H1 (cell line): ENCODE measurements at regions of chr19 and their contacts with region 1.

Region 1: DNA sequence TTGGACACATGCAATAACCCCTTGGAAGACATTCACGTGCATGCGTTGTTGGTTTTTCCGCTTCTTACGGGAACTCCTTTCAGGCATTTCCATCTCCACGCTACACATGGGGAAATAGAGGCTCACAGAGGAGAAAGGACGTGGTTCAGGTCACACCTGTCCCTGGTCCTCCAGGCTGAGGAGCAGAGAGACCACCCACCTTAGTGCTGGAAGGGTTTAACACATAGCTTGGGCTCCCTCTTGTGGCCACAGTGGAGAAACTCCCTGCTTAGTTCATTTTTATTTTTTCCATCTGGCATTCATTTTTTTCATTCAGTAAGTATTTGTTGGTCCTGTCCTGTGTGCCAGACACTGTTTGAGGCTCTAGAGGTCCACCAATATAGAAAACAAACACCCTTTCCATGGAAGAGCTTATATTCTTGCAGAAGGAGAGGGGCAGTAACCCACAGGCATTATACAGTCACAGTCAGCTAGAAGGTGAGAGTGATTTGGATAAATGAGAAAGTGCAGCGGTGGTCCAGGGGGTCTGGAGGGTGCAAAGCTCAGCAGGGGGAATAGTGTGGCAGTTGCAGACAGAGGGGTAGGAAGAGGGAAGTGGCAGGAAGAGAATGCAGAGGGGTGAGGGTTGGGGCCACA is 24.2 kb upstream of the TTYH1 start:
- DNase-seq: peak in 1 of 2 experiments; percentile 77
- H3K4me3 ChIP-seq: peak overlapping the region in 1 of 4 experiments; percentile 25; a peak in 1 of 8 replicates
- H3K27ac ChIP-seq: no peak overlapping the region
- H3K4me1 ChIP-seq: peaks cover 0 to 9% (median 6%) of the 10 kb centered on the region in 4 experiments; a peak in 6 of 7 replicates
- H3K27me3 ChIP-seq: peaks cover 0 to 2% (median 0%) of the 10 kb centered on the region in 4 experiments; a peak in 2 of 7 replicates
- CTCF ChIP-seq: peak; percentile 46 to 80 (median 79)
- EP300 ChIP-seq: no peak
- POLR2A ChIP-seq: no peak
- RAD21 ChIP-seq: peak; percentile 80 to 85

Region 2: GRCh38 chr19:54325194-54325621 is 65.9 kb before region 1 on chr19:
- CTCF ChIA-PET with region 1: interaction called, 56 read pairs
- POLR2A ChIA-PET with region 1: no interaction called
- DNase-seq: peak in 1 of 2 experiments; percentile 65
- H3K4me3 ChIP-seq: no peak overlapping the region
- H3K27ac ChIP-seq: no peak overlapping the region
- H3K4me1 ChIP-seq: peaks cover 0 to 7% (median 5%) of the 10 kb centered on the region in 4 experiments; a peak in 6 of 7 replicates
- H3K27me3 ChIP-seq: peaks cover 0 to 2% (median 0%) of the 10 kb centered on the region in 4 experiments; a peak in 1 of 7 replicates
- CTCF ChIP-seq: peak in 2 of 3 experiments; percentile 74 to 87; a peak in 3 of 4 replicates
- EP300 ChIP-seq: no peak
- POLR2A ChIP-seq: no peak
- RAD21 ChIP-seq: peak; percentile 58

Region 3: GRCh38 chr19:54364775-54365257 is 26.2 kb before region 1 on chr19 and contains the start of gene LAIR1:
- CTCF ChIA-PET with region 1: interaction called, 39 read pairs
- POLR2A ChIA-PET with region 1: interaction called, 3 read pairs
- DNase-seq: no peak
- H3K4me3 ChIP-seq: no peak within 1 kb of the TSS
- H3K27ac ChIP-seq: no peak within 1 kb of the TSS
- H3K4me1 ChIP-seq: peaks cover 0 to 3% (median 0%) of the 10 kb centered on the region in 4 experiments; a peak in 1 of 7 replicates
- H3K27me3 ChIP-seq: no peaks in the 10 kb centered on the region
- CTCF ChIP-seq: no peak
- EP300 ChIP-seq: no peak
- POLR2A ChIP-seq: no peak
- RAD21 ChIP-seq: no peak
- total RNA-seq, gene LAIR1: not detected in 2 replicates

Region 4: DNA sequence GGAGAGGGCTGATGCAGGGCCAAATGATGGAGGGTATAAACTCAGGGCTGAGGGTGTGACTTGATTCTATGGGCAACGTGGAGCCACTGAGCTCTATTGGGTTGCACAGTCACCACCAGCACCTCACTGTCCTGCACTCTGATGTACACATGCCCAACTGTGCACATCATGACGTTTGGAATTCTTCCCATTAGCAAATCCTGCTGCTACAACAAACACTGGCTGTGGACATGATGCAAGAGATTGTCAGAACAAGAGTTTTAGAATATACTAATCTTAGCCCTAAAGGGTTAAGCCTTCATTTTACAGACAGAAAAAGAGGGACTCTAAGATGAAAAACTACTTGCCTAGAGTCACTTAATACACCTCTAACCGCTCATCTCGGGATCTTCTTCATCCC is 21.8 kb after region 1 on chr19:
- CTCF ChIA-PET with region 1: interaction called, 30 read pairs
- POLR2A ChIA-PET with region 1: no interaction called
- DNase-seq: no peak
- H3K4me3 ChIP-seq: no peak overlapping the region
- H3K27ac ChIP-seq: no peak overlapping the region
- H3K4me1 ChIP-seq: peaks cover 4 to 20% (median 8%) of the 10 kb centered on the region in 4 experiments
- H3K27me3 ChIP-seq: peaks cover 6 to 25% (median 21%) of the 10 kb centered on the region in 4 experiments
- CTCF ChIP-seq: no peak
- EP300 ChIP-seq: no peak
- POLR2A ChIP-seq: no peak
- RAD21 ChIP-seq: no peak

Region 5: DNA sequence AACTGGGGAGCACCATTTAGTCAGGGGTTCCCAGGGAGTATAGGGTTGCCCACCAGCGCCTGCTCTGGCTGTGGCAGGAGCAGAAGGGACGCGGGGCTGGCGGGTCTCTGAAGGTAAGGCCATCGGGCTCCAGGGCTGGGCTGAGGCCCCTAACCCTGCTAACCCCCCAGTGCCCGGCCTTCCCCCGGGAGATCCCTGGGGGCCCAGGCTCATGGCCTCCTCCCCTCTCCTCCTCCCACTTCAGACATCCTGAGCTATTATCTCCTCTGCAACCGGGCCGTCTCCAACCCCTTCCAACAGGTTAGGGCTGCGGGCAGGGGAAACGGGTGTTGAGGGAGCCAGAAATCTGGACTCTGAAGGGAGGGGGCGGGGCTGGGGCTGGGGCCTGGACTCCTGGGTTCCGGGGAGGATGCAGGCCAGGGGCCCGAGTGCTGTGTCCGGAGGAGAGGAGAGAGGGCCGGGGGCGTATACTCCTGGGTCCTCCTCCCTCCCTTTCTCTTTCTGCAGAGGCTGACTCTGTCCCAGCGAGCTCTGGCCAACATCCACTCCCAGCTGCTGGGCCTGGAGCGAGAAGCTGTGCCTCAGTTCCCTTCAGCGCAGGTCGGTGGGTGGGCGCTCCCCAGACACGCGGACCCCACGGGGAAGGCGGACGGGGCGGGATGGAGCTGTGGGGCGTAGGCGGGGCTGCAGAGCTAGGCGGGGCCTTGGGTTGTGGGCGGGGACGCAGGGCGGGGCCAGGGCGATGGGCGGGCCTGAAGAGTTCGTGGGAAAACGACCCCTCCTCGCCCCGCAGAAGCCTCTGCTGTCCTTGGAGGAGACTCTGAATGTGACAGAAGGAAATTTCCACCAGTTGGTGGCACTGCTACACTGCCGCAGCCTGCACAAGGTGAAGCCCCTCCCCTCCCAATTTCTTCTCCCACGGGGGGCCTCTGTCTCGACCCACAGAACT is 39.5 kb after region 1 on chr19:
- CTCF ChIA-PET with region 1: interaction called, 109 read pairs
- POLR2A ChIA-PET with region 1: interaction called, 6 read pairs
- DNase-seq: peak in 1 of 2 experiments; percentile 94
- H3K4me3 ChIP-seq: peak overlapping the region; percentile 37 to 67 (median 44)
- H3K27ac ChIP-seq: no peak overlapping the region
- H3K4me1 ChIP-seq: peaks cover 0 to 30% (median 12%) of the 10 kb centered on the region in 4 experiments; a peak in 6 of 7 replicates
- H3K27me3 ChIP-seq: peaks cover 0 to 3% (median 0%) of the 10 kb centered on the region in 4 experiments; a peak in 2 of 7 replicates
- CTCF ChIP-seq: peak; percentile 37 to 46 (median 42); a peak in 3 of 4 replicates
- EP300 ChIP-seq: no peak
- POLR2A ChIP-seq: 0 out of 3 replicates have a peak, but pooled peaks of 1 of the 2 experiments have one; percentile 13
- RAD21 ChIP-seq: peak; percentile 49 to 55

Region 6: DNA sequence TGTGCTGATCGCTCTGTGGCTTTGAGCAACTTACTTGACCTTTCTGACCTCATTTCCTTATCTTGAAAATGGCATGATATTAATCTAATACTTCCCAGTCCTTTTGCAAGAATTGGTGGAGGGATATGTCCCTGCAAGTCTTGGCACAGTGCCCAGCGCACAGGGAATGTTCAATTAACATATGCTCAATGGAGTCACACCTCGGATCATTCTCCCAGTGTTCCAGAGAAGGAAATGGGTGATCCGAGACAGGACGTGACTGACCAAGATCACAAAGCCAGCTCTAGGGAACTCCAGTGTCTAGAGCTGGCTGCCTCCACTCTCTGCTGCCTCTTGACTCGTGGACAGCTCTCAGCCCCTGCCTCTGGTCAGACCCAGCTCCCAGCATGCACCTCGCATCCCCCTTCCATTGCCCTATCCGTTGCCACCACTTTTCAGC is 78.5 kb after region 1 on chr19:
- CTCF ChIA-PET with region 1: no interaction called
- POLR2A ChIA-PET with region 1: no interaction called
- DNase-seq: no peak
- H3K4me3 ChIP-seq: no peak overlapping the region
- H3K27ac ChIP-seq: no peak overlapping the region
- H3K4me1 ChIP-seq: peaks cover 3 to 10% (median 3%) of the 10 kb centered on the region in 4 experiments; a peak in 6 of 7 replicates
- H3K27me3 ChIP-seq: peaks cover 3 to 35% (median 24%) of the 10 kb centered on the region in 4 experiments
- CTCF ChIP-seq: no peak
- EP300 ChIP-seq: no peak
- POLR2A ChIP-seq: no peak
- RAD21 ChIP-seq: no peak